Activated T-helper 1 cell treated with anti-CD3 and anti-CD28 coated beads, Interleukin-12 subunit alpha, Interleukin-12 subunit beta, Interleukin-2, Interleukin-4 antibody, amounts not matched to agents 30 ng/mL and 10 ng/mL and 1 ng/mL, durations not matched to agents 14 hours and 24 hours and 36 hours (primary cell): ENCODE measurements at regions of chr10 and their contacts with region 1.

Region 1: DNA sequence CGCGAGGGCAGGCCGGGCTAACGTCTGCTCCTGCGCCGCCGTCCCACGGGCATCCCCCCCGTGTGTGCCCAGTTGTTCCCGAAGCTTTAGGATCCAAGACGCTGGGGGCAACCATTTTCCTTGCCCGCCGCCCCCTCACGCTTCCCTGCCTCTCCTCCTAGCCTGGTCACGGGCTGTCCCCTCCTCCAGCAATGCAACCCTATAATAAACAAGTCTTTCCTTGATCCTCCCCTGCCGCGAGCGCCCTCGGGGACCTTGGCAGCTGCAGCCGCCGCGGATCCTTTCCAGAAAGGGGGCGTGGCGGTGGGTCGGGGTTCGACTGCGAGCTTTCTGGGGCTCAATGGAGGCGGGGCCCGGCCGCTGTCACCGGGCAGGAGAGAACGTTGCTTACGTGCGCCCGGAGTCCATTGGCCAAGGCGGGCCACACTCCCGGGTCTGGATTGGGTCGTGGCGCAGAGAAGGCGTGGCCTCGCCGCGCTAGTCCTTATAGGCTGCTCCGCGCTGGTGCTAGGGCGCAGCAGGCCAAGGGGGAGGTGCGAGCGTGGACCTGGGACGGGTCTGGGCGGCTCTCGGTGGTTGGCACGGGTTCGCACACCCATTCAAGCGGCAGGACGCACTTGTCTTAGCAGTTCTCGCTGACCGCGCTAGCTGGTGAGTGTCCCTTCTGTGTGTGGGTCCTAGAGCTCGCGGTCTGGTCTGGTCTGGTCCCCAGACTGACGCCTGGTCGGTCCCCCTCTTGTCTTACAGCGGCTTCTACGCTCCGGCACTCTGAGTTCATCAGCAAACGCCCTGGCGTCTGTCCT is at the start of gene DDIT4:
- DNase-seq: peak; percentile 99
- H3K4me3 Mint-ChIP-seq: peak within 1 kb of the TSS; percentile 97
- H3K27ac Mint-ChIP-seq: peak within 1 kb of the TSS; percentile 97
- H3K4me1 Mint-ChIP-seq: peaks cover 56% of the 10 kb centered on the region
- H3K27me3 Mint-ChIP-seq: no peaks in the 10 kb centered on the region
- total RNA-seq, gene DDIT4: 178 and 183 TPM in 2 replicates

Region 2: DNA sequence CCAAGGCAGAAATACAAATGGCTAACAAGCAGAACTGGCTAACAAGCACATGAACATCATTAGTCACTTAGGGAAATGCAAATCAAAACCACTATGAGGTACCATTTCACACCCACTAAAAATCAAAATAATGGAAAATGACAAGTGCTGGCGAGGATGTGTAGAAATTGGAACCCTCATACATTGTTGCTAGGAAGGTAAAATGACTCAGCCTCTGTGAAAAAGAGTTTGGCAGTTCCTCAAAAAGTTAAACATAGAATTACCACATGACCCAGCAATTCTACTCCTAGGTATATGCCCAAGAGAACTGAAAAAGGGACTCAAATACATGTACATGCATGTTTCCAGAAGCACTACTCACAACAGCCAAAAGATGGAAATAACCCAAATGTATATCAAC is 110.6 kb before region 1 on chr10:
- intact Hi-C with region 1: loop called (anchors 1 kb)
- DNase-seq: no peak
- H3K4me3 Mint-ChIP-seq: peak overlapping the region; percentile 57
- H3K27ac Mint-ChIP-seq: peak overlapping the region; percentile 80
- H3K4me1 Mint-ChIP-seq: peaks cover 27% of the 10 kb centered on the region
- H3K27me3 Mint-ChIP-seq: no peaks in the 10 kb centered on the region

Region 3: GRCh38 chr10:72223743-72224101 is 49.9 kb before region 1 on chr10:
- intact Hi-C with region 1: loop called (anchors 2 kb)
- DNase-seq: no peak
- H3K4me3 Mint-ChIP-seq: no peak overlapping the region
- H3K27ac Mint-ChIP-seq: peak overlapping the region; percentile 12
- H3K4me1 Mint-ChIP-seq: peaks cover 44% of the 10 kb centered on the region
- H3K27me3 Mint-ChIP-seq: no peaks in the 10 kb centered on the region

Region 4: DNA sequence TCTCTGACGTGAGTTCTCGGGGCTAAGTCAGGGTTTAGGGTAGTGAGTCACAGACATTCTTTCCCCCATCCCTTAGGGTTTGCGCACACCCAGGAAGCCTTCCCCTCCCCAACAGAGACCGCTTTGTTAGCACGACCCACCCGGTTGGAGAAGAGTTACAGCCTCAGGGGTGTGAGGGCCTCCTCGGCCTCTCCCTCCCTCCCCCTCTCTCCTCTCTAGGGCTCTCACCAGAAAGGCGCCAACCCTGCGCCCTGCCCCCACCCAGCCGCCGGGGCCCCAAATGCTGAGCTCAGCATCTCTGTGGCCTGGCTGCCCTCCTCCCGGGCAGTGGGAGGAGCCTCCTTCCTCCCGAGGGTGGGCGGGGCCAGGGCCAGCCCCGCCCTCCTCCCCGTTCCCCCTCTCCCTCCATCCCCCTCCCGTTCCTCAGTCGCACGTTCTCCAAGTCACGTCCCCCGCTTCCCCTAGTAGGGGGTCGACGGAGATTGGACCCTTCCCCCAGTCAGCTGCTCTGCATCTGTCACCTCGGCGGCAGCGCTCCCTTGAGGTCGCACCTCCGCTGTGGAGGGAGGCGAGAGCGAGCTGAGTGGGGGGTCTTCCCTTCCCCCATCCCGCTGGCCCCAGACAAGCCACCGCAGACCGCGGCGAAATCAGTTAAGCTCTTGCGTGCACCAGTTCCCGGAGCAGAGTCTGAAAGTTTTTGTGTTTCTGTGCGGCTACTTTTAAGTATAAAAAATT is 12.9 kb before region 1 on chr10:
- intact Hi-C with region 1: loop called (anchors 1 kb)
- DNase-seq: peak; percentile 81
- H3K4me3 Mint-ChIP-seq: peak overlapping the region; percentile 86
- H3K27ac Mint-ChIP-seq: peak overlapping the region; percentile 98
- H3K4me1 Mint-ChIP-seq: peaks cover 67% of the 10 kb centered on the region
- H3K27me3 Mint-ChIP-seq: no peaks in the 10 kb centered on the region

Region 5: GRCh38 chr10:72297968-72298773 is 24.6 kb after region 1 on chr10:
- intact Hi-C with region 1: loop called (anchors 1 kb)
- DNase-seq: peak; percentile 92
- H3K4me3 Mint-ChIP-seq: peak overlapping the region; percentile 78
- H3K27ac Mint-ChIP-seq: peak overlapping the region; percentile 100
- H3K4me1 Mint-ChIP-seq: peaks cover 54% of the 10 kb centered on the region
- H3K27me3 Mint-ChIP-seq: no peaks in the 10 kb centered on the region

Region 6: DNA sequence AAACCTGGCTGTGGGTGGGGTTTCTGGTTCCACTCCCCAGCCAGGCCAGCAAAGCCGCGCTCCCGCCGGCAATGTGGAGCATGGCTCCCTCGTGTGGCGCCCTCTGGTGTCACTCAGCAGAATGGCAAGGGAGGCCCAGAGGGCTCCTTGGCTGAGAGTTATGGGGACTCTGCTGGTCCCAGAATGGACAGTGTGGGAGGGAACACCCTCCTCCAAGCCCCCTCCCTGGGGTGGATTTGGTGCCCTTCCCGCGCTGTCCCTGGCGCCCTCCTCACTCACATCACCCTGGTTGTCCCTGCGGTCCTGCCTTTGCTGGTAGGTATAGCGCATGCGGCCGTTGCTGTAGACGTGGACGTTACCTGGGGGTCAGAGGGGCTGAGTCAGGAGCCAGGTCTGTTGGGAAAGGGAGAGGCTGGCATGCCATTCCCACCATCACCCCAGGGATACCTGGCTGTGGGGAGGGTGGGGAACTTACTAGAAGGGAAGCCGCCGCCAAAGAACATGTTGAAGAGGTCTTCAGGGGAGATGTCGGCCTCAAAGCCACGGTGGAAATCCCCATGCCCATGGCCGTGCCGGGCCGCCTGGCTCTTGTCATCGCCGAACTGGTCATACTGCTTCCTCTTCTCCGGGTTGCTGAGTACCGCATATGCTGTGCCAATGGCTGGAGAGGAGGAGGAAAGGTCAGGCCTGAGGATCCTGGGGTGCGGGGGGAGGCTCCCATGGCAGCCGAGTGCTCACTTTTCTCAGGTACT is 67.1 kb after region 1 on chr10:
- intact Hi-C with region 1: loop called (anchors 1 kb)
- DNase-seq: peak; percentile 75
- H3K4me3 Mint-ChIP-seq: no peak overlapping the region
- H3K27ac Mint-ChIP-seq: no peak overlapping the region
- H3K4me1 Mint-ChIP-seq: peaks cover 40% of the 10 kb centered on the region
- H3K27me3 Mint-ChIP-seq: no peaks in the 10 kb centered on the region

Region 7: DNA sequence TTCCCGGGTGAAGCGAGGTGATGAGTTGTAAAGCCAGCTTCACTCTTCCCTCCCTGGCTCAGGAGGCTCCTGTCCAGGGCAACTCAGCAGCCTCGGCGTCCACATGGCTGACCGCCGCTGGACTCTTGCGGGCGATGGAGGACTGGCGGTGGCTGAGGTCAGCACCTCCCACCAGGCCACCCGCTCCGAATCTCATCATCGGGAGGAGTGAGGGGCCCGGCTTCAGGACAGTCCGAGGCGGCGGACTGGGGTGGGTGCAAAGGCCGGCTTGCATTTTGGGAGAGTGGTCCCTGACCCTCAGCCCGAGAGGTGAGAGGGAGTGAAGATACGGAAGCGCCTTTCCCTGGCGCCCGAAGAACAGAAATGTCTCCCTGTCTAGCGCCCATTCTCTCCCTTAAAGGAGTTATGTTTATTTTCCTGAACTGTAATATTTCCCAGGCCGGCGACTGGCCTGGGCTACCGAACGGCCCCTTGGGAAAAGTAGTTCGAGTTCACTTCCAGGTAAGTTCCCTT is 80.4 kb after region 1 on chr10:
- intact Hi-C with region 1: no loop called
- DNase-seq: no peak
- H3K4me3 Mint-ChIP-seq: peak overlapping the region; percentile 97
- H3K27ac Mint-ChIP-seq: peak overlapping the region; percentile 96
- H3K4me1 Mint-ChIP-seq: peaks cover 36% of the 10 kb centered on the region
- H3K27me3 Mint-ChIP-seq: peaks cover 2% of the 10 kb centered on the region

Region 8: DNA sequence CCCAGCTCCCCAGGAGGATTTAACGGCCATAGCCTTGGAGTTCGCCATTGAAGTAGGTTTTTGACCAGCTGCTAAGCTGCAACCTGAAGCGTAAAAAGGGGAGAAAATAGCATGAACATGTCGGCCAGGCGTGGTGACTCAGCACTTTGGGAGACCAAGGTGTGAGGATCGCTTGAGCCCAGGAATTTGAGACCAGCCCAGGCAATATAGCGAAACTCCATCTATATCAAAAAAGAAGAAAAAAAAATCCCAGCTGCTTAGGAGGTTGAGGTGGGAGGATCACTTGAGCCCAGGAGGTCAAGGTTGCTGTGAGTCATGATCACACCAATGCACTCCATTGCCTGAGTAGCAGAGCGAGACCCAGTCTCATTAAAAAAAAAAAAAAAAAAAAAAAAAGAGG is 386.1 kb after region 1 on chr10:
- intact Hi-C with region 1: no loop called
- DNase-seq: no peak
- H3K4me3 Mint-ChIP-seq: no peak overlapping the region
- H3K27ac Mint-ChIP-seq: no peak overlapping the region
- H3K4me1 Mint-ChIP-seq: no peaks in the 10 kb centered on the region
- H3K27me3 Mint-ChIP-seq: peaks cover 9% of the 10 kb centered on the region